ENCODE measurements at regions of chr5 and their contacts with region 1.

Region 1: DNA sequence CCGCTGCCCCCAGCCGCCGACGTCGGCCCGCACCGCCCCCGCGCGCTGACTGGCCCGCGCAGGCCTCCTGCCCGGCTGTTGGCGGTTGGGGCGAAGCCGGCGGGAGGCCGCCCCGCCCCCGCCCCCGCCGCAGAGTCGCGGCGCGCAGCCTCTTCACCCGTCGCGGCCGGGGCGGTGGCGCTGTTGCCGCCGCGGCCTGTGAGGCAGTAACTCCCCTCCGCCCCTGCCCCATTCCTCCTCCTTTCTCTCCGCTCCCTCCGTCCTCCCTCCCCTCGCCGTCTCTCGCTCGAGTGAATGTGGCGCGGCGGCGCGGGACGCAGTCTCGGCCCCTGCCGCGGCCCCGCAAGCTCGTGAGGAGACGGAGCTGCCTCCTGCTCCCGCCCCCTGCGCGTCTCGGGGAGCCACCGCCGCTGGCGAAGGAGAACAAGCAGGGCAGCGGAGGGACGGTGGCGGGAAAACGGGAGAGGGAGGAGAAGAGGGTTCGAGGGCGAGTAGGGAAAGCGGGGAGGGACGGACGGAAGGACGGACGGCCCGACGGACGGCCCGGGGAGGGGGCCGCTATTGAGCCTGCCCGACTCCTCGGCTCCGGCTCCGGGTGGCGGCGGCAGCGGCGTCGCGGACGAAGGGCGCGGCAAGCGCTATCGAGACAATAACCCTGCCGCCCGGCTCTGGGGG is 637 bp upstream of the ERBIN start:
- DNase-seq: peak; percentile 85 to 95 (median 94)
- ATAC-seq: peak; percentile 93 to 96
- H3K4me3 ChIP-seq: peak overlapping the region; percentile 74
- H3K27ac ChIP-seq: peak overlapping the region; percentile 99
- H3K4me1 ChIP-seq: no peaks in the 10 kb centered on the region
- H3K27me3 ChIP-seq: no peaks in the 10 kb centered on the region

Region 2: GRCh38 chr5:65749956-65750355 is 175.8 kb before region 1 on chr5:
- intact Hi-C with region 1: no loop called
- DNase-seq: no peak
- ATAC-seq: peak; percentile 53 to 62
- H3K4me3 ChIP-seq: no peak overlapping the region
- H3K27ac ChIP-seq: no peak overlapping the region
- H3K4me1 ChIP-seq: no peaks in the 10 kb centered on the region
- H3K27me3 ChIP-seq: no peaks in the 10 kb centered on the region

Region 3: GRCh38 chr5:65779643-65780042 is 146.1 kb before region 1 on chr5:
- intact Hi-C with region 1: loop called in 1 of 4 experiments (anchors 10 kb)
- DNase-seq: no peak
- ATAC-seq: no peak
- H3K4me3 ChIP-seq: no peak overlapping the region
- H3K27ac ChIP-seq: no peak overlapping the region
- H3K4me1 ChIP-seq: no peaks in the 10 kb centered on the region
- H3K27me3 ChIP-seq: no peaks in the 10 kb centered on the region

Region 4: DNA sequence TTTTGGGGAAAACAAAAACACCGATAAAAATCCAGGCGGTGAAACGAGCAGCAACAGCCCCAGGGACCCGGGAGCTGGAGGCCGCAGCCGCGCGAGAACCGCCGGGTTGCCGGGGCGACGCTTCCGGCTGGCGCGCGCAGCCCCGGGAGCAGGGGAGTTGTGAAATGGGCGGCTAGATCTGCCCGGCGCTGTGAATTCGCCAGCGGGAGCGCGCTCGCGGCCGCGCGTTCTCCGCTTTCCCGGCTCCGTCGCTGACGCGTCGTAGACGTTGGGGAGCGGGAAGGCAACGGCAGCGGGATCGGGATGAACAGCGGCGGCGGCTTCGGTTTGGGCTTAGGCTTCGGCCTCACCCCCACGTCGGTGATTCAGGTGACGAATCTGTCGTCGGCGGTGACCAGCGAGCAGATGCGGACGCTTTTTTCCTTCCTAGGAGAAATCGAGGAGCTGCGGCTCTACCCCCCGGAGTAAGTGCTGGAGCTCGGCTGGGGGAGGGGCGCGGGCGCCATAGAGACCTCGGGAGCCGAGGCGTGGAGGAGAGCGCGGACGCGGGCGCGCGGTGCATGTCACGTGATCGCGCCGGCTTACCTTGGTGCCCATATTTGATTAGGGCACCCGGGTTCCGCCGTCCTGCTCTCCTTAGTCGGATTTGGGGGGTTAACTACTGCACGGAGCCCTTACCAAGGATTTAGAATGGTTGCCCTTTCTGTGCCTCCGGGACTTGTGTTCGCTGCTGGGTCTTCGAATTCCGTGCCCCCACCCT is 218.5 kb after region 1 on chr5 and contains the start of gene SREK1:
- intact Hi-C with region 1: loop called in 1 of 4 experiments (anchors 10 kb)
- DNase-seq: peak; percentile 94 to 98 (median 97)
- ATAC-seq: peak; percentile 97 to 98
- H3K4me3 ChIP-seq: peak within 1 kb of the TSS; percentile 79
- H3K27ac ChIP-seq: peak within 1 kb of the TSS; percentile 85
- H3K4me1 ChIP-seq: no peaks in the 10 kb centered on the region
- H3K27me3 ChIP-seq: no peaks in the 10 kb centered on the region
- total RNA-seq, gene SREK1: 32.5 to 42.6 (median 33.3) TPM